Breast epithelium (tissue), 4 donors: ENCODE measurements at regions of chr9 and their contacts with region 1.

Region 1: GRCh38 chr9:78215706-78216105 is 20.2 kb upstream of the CEP78 start:
- DNase-seq: no peak
- H3K4me3 ChIP-seq: no peak overlapping the region
- H3K27ac ChIP-seq: no peak overlapping the region
- H3K4me1 ChIP-seq: no peaks in the 10 kb centered on the region
- H3K27me3 ChIP-seq: no peaks in the 10 kb centered on the region
- CTCF ChIP-seq: no peak
- POLR2A ChIP-seq: no peak

Region 2: DNA sequence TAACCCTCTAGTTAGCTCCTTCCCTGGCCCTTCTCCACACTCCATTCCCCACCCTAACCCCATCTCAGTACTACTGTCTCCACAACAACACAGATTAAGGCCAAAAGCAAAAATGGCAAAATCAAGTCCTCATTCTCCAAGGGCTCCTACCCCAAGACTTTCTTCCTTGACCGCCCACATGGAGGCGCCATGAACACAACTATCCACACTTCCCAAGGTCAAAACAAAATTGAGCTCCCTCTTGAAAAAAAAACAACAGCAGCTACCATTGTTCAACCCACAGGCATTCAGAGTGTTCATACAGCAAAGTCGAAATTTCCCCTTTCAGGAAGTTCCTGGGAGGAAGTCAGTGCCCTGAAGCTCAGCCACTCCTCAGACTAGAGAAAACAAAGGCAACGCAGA is 238.5 kb before region 1 on chr9:
- intact Hi-C with region 1: loop called (anchors 5 kb)
- DNase-seq: peak in 1 of 2 donors; percentile 34
- H3K4me3 ChIP-seq: no peak overlapping the region
- H3K27ac ChIP-seq: peak overlapping the region; percentile 54 to 55
- H3K4me1 ChIP-seq: peaks cover 0 to 11% of the 10 kb centered on the region in 2 donors
- H3K27me3 ChIP-seq: no peaks in the 10 kb centered on the region
- CTCF ChIP-seq: peak in 2 of 3 donors; percentile 37 to 45
- POLR2A ChIP-seq: no peak

Region 3: DNA sequence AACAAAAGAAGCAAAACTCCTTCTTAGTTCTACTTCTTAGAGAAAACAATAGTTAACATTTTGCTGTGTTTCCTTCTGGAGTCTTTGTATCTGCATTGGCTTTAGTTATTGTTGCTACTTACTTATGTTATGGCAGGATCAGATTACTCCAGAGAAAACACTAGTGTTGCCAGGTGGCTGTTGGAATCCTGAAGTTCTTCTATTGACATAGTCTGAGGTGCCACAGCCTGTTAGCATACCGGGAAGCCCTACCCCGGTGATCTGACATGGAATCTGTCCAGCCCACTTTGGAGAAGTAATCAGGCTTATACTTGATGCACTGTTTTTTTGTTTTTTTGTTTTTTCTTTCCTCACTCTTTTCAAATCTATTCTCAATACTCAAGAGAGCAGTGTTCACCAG is 48.4 kb before region 1 on chr9:
- intact Hi-C with region 1: no loop called
- DNase-seq: peak; percentile 35 to 63
- H3K4me3 ChIP-seq: no peak overlapping the region
- H3K27ac ChIP-seq: peak overlapping the region in 1 of 2 donors; percentile 22
- H3K4me1 ChIP-seq: no peaks in the 10 kb centered on the region
- H3K27me3 ChIP-seq: no peaks in the 10 kb centered on the region
- CTCF ChIP-seq: no peak
- POLR2A ChIP-seq: no peak

Region 4: DNA sequence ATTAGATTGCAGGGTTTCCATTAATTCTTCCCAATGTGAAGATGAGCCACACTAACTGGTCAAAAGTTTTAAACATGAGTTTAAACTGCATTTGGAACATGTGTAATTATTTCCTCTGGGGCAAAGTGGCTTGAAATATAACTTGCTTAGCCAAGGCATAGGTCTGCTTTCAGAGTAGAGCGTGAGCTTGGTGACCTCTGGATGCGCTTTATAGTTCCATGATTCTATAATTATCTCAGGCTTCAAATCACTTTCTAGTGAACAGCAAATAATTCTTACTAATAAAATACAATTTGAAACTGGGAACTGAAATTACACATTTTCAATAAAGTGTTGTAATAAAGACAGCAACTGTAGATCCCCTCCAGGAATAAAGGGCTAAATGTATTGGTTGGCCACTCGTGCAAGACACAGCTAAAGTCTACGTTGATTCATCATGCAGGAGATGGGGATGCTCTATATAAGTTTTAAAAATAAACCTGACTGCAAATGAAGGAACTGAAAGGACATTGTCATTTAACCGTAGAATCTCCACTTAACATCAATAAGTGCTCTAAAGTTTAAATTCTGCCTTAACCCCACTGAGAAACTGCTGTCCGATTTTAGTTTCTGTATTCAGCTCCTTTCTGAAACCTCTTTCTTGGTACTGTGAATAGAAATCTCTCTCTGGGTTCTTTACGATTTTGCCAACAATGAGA is 541.3 kb after region 1 on chr9:
- intact Hi-C with region 1: loop called (anchors 5 kb)
- DNase-seq: no peak
- H3K4me3 ChIP-seq: no peak overlapping the region
- H3K27ac ChIP-seq: no peak overlapping the region
- H3K4me1 ChIP-seq: no peaks in the 10 kb centered on the region
- H3K27me3 ChIP-seq: no peaks in the 10 kb centered on the region
- CTCF ChIP-seq: no peak
- POLR2A ChIP-seq: no peak